CD14-positive monocyte (primary cell): ENCODE measurements at regions of chr21 and their contacts with region 1.

Region 1: DNA sequence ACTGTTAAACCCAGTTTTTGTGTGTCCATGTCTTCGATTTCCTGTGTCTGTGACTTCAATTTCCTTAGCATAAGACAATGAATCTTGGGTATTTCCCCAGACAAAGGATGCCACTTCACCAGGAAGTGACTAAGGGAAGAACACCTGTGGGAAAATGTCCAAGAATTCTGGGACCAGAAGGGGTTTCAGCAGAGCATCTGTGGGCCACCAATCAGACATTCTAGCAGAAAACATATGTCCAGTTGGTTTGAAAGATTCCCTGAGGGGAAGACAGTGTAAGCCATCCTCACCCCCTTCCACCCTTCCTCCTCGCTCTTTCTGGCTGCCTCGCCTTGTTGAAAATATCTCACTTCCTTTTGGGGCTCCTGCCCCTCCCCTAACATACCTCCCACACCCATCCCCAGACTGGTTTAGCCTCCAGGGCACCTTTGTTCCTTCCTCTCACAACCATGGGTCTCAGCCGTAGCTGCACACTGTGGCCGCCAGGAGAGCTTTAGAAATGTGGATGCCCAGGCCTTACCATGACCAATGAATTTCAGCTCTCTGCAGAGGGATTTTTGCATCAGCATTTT is 25.5 kb upstream of the IFNAR1 start:
- DNase-seq: peak; percentile 72 to 81 (median 79)
- H3K4me3 ChIP-seq: peak overlapping the region in 1 of 3 experiments; percentile 41
- H3K4me3 Mint-ChIP-seq: peak overlapping the region in 1 of 2 donors; percentile 68
- H3K27ac ChIP-seq: peak overlapping the region; percentile 87 to 95
- H3K27ac Mint-ChIP-seq: peak overlapping the region; percentile 94 to 99 (median 97)
- H3K4me1 ChIP-seq: peaks cover 64 to 73% of the 10 kb centered on the region in 2 donors
- H3K4me1 Mint-ChIP-seq: peaks cover 67% of the 10 kb centered on the region
- H3K27me3 ChIP-seq: no peaks in the 10 kb centered on the region
- H3K27me3 Mint-ChIP-seq: peaks cover 0 to 1% (median 0%) of the 10 kb centered on the region in 3 donors
- CTCF ChIP-seq: peak; percentile 59

Region 2: GRCh38 chr21:33332143-33332542 is 32.9 kb after region 1 on chr21:
- intact Hi-C with region 1: loop called in 1 of 2 experiments (anchors 5 kb)
- DNase-seq: no peak
- H3K4me3 ChIP-seq: no peak overlapping the region
- H3K4me3 Mint-ChIP-seq: no peak overlapping the region
- H3K27ac ChIP-seq: peak overlapping the region in 1 of 2 donors; percentile 34
- H3K27ac Mint-ChIP-seq: peak overlapping the region in 1 of 7 donors; percentile 37
- H3K4me1 ChIP-seq: peaks cover 7 to 13% of the 10 kb centered on the region in 2 donors
- H3K4me1 Mint-ChIP-seq: peaks cover 29% of the 10 kb centered on the region
- H3K27me3 ChIP-seq: no peaks in the 10 kb centered on the region
- H3K27me3 Mint-ChIP-seq: no peaks in the 10 kb centered on the region
- CTCF ChIP-seq: no peak